ENCODE measurements at regions of chr5 and their contacts with region 1.

Region 1: DNA sequence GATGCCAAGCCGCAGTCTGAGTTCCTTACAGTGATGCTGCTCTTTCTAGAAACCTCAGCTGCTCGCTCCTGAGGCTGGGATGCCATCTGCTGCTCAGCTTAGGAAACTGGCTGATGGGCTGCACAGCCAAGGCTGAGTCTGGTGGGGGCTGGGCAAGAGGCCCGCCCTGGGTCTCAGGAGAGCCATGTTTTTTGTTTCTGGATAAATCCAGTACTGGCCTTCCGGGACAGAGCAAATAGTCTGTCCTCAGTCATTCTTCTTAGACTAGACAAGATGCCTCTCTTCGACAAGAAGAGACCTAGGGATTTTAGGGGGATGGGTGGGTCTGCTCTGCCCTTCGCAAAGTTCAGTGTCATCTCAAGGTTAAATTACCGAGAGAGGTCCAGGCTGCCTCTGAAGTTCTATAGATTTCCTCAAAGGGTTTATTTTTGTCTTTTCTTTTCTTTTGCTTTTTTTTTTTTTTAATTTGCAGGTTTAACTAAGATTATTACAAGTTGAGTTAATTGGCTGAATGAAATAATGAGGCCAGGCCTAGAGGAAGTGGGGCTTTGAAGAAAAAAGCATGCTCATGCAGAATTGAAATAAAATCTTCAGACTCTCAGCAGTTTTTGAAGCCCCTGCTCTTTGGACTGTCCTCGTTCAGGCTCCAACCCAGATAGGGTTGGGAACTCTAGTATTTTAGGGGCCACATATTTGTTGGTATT is 30.6 kb upstream of the MATR3 start:
- DNase-seq: peak; percentile 87 to 92 (median 89)
- ATAC-seq: peak; percentile 97 to 99 (median 98)
- H3K4me3 ChIP-seq: no peak overlapping the region
- H3K27ac ChIP-seq: peak overlapping the region in 10 of 12 donors; percentile 21 to 68 (median 30)
- H3K4me1 ChIP-seq: peaks cover 0 to 21% (median 12%) of the 10 kb centered on the region in 12 donors
- H3K27me3 ChIP-seq: no peaks in the 10 kb centered on the region
- CTCF ChIP-seq: peak; percentile 71 to 97 (median 92)
- POLR2A ChIP-seq: no peak

Region 2: GRCh38 chr5:138575194-138576015 is 687.5 kb before region 1 on chr5 and contains the start of gene HSPA9:
- intact Hi-C with region 1: loop called in 9 of 10 experiments (anchors 2 to 10 kb)
- DNase-seq: peak; percentile 98 to 99 (median 98)
- ATAC-seq: peak; percentile 95 to 98 (median 96)
- H3K4me3 ChIP-seq: peak within 1 kb of the TSS; percentile 68 to 98 (median 89)
- H3K27ac ChIP-seq: peak within 1 kb of the TSS; percentile 98 to 100 (median 99)
- H3K4me1 ChIP-seq: peaks cover 0 to 35% (median 11%) of the 10 kb centered on the region in 12 donors
- H3K27me3 ChIP-seq: no peaks in the 10 kb centered on the region
- CTCF ChIP-seq: no peak
- POLR2A ChIP-seq: peak; percentile 33 to 54
- total RNA-seq, gene HSPA9: 211 to 481 (median 313) TPM

Region 3: DNA sequence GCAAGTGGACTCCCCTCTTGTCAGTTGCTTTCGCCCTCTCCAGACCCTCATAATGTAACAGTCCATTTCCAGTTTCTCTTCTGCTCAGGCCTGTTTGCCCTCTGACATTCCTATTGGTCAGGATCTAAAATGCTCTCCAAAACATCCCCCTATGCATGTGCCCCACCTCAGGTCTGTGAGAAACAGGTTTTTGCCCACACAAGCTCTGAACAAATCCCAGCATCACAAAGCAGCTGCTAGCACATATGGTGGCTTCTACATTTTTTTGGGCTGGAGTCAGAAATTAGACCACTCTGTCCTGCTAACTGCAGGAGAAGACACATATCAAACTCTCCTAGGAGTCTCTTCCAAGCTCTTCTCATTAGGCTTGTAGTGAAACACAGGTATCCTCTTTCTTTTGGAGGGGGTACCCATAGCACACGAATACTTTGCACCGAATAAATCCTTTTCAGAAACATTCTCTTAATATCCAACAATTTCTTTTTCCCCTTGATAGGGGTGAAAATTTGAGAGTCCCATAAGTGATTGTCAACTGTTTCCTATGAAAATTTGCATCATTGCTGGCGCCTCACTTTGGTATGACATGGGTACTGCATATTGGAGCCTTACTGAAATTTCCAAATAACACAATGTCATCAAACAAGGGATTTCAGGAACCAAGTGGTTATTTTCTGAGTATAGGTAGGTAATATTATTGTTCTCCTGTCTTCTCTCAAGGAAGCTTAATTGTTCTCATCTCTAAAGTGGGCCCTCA is 668.4 kb before region 1 on chr5:
- intact Hi-C with region 1: loop called in 2 of 10 experiments (anchors 5 to 10 kb)
- DNase-seq: no peak
- ATAC-seq: no peak
- H3K4me3 ChIP-seq: no peak overlapping the region
- H3K27ac ChIP-seq: no peak overlapping the region
- H3K4me1 ChIP-seq: no peaks in the 10 kb centered on the region
- H3K27me3 ChIP-seq: no peaks in the 10 kb centered on the region
- CTCF ChIP-seq: peak in 7 of 12 donors; percentile 5 to 39 (median 24)
- POLR2A ChIP-seq: no peak

Region 4: DNA sequence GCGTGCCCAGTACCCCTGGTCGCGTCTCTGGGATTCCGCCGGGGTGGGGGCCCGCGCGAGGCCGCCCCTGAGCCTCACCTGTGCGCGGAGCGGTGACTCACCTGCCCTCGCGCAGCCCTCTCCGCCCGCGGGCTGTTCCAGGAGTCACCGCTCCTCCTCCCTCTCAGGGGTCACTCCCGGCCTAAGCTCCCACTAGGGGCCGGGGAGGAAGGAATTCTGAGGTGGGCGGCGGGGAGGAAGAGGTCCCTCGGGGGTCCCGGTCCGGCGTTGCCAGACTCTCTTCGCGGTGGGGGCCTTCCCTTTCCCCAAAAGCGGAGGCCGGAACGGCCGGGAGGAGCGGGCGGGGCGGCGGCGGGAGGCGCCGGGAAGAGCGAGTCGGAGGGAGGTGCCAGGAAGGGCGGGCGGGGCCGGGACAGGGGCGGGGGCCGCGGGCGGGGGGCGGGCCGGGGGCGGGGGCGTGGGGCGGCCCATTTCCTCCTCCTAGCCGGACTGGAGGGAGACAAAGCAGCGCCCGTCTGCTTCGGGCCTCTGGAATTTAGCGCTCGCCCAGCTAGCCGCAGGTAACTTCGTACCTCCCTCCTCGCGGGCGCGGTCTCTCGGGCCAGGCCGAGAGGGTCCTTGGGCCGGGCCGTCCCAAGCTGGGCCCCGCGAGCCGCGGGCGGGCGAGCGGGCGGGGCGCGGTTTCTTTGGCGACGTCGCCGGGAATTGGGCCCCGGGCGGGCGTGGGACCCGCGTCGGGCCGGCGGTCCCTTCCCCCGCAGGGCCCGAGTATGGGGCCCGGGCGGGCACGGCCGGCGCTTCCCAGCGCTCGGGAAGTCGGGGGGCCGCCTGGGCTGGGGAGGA is 509.7 kb before region 1 on chr5 and contains the start of gene CTNNA1:
- intact Hi-C with region 1: loop called in 3 of 10 experiments (anchors 2 to 10 kb)
- DNase-seq: peak; percentile 79 to 92 (median 88)
- ATAC-seq: peak; percentile 64 to 85 (median 78)
- H3K4me3 ChIP-seq: peak within 1 kb of the TSS; percentile 63 to 100 (median 95)
- H3K27ac ChIP-seq: peak within 1 kb of the TSS; percentile 99 to 100 (median 100)
- H3K4me1 ChIP-seq: peaks cover 13 to 41% (median 32%) of the 10 kb centered on the region in 12 donors
- H3K27me3 ChIP-seq: no peaks in the 10 kb centered on the region
- CTCF ChIP-seq: peak in 1 of 12 donors; percentile 1
- POLR2A ChIP-seq: peak in 1 of 2 donors; percentile 79
- total RNA-seq, gene CTNNA1: 331 to 460 (median 410) TPM

Region 5: GRCh38 chr5:139091439-139092156 is 171.3 kb before region 1 on chr5:
- intact Hi-C with region 1: loop called (anchors 1 to 10 kb)
- DNase-seq: no peak
- ATAC-seq: peak; percentile 83 to 92 (median 86)
- H3K4me3 ChIP-seq: no peak overlapping the region
- H3K27ac ChIP-seq: peak overlapping the region in 1 of 12 donors; percentile 2
- H3K4me1 ChIP-seq: peaks cover 0 to 13% (median 2%) of the 10 kb centered on the region in 12 donors
- H3K27me3 ChIP-seq: no peaks in the 10 kb centered on the region
- CTCF ChIP-seq: peak in 11 of 12 donors; percentile 20 to 63 (median 46)
- POLR2A ChIP-seq: no peak

Measured in heart left ventricle (tissue), 16 donors.